ENCODE measurements at regions of chr17 and their contacts with region 1.

Region 1: DNA sequence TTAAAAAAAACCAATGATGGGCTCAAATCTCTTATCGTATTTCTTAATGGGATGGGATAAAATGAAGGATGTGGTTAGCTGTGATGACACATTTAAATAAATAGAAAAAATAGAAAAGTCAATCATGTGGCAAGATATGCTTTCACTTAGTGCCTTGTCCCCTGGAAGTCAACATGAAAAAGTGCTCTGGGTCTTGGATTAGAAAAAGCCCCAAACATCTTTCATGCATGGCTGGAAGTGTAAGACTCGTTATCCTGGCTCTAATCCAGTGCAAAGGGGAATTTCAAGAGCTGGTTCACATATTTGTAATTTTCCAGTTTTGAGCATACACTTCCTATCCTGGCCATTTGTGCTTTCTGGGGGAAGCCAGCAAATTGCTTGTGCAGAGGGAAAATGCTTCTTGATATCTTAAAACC is 160.9 kb downstream of the MAP2K6 start:
- DNase-seq: peak; percentile 97

Region 2: DNA sequence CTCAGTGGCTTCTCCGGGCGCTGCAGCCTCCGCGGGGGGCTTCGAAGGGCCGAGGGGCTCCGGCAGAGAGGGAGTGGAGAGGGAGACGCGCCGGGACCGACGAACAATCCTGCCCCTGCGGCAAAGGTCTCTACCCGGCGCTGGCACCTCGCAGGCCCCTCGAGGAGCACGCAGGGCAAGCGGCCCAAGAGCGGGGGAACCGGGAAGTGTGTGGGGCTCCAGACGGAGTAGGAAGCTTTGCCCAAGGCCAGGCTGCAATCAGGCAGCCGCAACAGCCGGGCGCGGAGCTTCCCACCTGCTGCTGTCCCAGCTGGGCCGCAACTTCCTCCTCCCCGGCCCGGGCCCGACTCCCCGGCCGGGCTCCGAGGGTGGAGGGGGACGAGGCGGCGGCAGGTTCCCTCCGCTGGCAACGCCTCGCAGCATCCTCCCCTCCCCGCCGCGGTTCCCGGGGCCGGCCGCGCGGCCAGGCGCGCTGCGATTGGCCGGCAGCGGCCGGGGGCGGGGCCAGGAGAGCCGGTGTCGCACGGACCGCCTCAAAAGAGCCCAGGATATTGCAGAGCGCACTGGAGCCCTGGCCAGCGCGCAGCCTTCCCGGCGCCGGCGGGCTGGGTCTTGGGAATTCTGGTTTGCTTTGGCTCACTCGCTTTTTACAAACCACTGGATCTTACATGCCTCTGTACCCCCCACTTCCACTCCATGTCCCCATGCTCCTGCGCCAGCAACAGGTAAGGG is 593.8 kb after region 1 on chr17 and contains the start of gene KCNJ2:
- in situ Hi-C with region 1: loop called (anchors 10 kb)
- DNase-seq: peak; percentile 95
- total RNA-seq, gene KCNJ2: 2.4 and 3.6 TPM in 2 replicates

Measured in Caki2 (cell line).